ENCODE measurements at regions of chr18 and their contacts with region 1.

Region 1: GRCh38 chr18:3129053-3129864 is 90.5 kb downstream of the MYOM1 start:
- DNase-seq: peak; percentile 58 to 86 (median 77)
- ATAC-seq: peak; percentile 99
- H3K4me3 ChIP-seq: no peak overlapping the region
- H3K4me3 Mint-ChIP-seq: no peak overlapping the region
- H3K27ac ChIP-seq: no peak overlapping the region
- H3K27ac Mint-ChIP-seq: no peak overlapping the region
- H3K4me1 ChIP-seq: no peaks in the 10 kb centered on the region
- H3K4me1 Mint-ChIP-seq: peaks cover 9% of the 10 kb centered on the region
- H3K27me3 ChIP-seq: no peaks in the 10 kb centered on the region
- H3K27me3 Mint-ChIP-seq: no peaks in the 10 kb centered on the region
- CTCF ChIP-seq: peak; percentile 67

Region 2: DNA sequence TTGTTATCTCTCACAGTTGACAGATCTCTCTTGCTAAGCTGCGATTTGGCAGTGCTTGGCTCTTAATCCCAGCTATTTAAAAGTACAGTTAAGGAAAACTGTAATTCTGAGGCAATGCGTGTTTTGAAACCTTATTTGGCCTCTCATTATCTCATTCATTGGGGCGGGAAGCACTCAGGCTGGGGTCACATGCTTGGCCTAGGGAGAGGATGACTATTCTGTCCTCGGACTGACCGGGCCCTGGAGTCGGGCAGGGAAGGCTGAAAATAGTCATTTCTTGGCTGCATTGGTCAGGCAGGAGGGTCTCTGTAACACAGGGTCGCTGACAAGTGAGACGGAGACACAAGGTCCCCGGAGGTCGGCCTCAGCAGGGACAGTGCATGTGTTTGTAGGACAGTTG is 302.7 kb before region 1 on chr18:
- CTCF ChIA-PET with region 1: no interaction called
- POLR2A ChIA-PET with region 1: no interaction called
- intact Hi-C with region 1: no loop called
- DNase-seq: no peak
- ATAC-seq: no peak
- H3K4me3 ChIP-seq: no peak overlapping the region
- H3K4me3 Mint-ChIP-seq: no peak overlapping the region
- H3K27ac ChIP-seq: no peak overlapping the region
- H3K27ac Mint-ChIP-seq: no peak overlapping the region
- H3K4me1 ChIP-seq: no peaks in the 10 kb centered on the region
- H3K4me1 Mint-ChIP-seq: no peaks in the 10 kb centered on the region
- H3K27me3 ChIP-seq: no peaks in the 10 kb centered on the region
- H3K27me3 Mint-ChIP-seq: no peaks in the 10 kb centered on the region
- CTCF ChIP-seq: no peak

Region 3: DNA sequence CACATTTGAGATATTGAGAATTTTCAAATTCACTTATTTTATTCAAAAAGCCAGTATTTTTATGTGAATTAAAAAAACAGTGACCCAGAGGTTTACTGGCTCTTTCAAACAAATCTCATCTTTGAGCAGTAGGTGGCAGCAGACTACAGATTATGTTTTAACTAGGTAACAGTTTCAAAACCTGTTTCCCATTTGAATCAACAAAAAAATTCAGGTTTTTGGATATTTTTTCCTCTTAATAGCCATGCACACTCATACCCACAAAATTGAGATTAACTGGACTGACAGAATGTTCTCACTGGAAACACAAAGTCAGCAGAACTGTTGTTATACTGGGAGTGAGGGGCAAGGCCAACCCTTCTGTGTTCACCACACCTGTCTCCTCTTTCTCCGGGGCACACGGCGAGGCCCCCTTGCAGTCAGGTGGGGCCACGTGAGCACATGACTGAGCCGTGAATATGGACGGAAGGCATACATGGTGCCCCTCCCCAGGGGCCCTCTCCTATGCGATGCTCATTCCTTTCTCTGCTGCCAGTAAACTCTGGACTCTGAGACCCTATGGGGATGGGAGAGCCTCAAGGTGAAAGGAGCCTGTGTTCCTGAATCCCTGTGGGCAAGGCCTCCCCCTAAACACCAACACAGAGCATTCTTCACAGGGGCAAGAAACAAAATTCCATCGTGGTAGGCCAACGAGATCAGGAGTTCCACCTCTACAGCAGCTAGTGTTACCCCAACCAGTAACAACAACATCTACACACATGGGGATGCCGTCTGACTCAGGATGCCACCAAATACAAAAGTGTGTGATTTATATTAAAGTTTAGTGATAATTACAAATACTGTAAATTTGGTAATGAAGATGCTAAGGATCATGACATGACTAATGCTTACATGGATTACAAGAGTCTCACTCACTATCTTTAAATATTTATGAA is 196.7 kb before region 1 on chr18:
- CTCF ChIA-PET with region 1: interaction called, 36 read pairs
- POLR2A ChIA-PET with region 1: no interaction called
- intact Hi-C with region 1: loop called (anchors 1 kb)
- DNase-seq: peak in 6 of 9 experiments; percentile 37 to 82 (median 52)
- ATAC-seq: peak; percentile 79
- H3K4me3 ChIP-seq: no peak overlapping the region
- H3K4me3 Mint-ChIP-seq: no peak overlapping the region
- H3K27ac ChIP-seq: peak overlapping the region in 1 of 2 experiments; percentile 51
- H3K27ac Mint-ChIP-seq: peak overlapping the region; percentile 89
- H3K4me1 ChIP-seq: peaks cover 6% of the 10 kb centered on the region
- H3K4me1 Mint-ChIP-seq: peaks cover 23% of the 10 kb centered on the region
- H3K27me3 ChIP-seq: no peaks in the 10 kb centered on the region
- H3K27me3 Mint-ChIP-seq: no peaks in the 10 kb centered on the region
- CTCF ChIP-seq: peak; percentile 96

Region 4: DNA sequence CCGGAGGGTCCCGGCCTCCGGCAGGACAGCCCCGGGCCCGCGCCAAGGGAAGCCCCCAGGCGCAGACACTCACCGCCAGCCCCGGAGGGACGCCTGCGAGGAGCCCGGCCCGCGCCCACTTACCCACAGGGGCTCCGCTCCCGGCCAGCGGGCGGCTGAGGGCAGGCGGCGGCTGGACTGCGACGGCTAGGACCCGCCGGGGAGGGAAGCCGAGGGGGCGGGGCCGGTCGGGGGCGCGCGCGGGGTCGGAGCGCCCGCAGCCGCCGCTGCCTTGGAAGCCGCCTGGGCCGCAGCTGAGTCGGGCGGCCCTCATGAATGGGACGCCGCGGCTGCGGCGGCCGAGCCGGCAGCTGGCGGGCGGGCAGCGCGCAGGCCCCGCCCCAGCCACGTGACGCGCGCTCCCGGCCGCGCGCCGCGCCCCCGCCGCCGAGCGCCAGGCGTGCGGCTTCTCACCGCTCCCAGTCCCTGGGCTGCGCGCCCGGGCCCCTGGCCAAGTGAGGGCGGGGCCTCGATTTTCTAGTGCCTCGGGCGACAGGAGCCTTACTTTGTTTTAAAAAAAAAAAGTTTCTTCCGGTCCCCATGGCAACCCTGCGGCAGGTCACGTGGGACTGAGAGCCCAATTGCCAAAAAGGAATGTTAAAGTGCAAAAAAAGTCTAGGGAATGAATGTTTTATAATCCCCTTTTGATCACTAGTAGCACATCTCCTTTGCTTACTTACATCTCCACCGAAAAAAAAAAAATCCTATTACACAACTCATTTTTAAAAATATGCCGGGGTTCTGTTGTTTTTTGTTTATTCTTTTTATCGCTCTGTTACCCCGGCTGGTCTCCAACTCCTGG is 116.1 kb before region 1 on chr18 and contains the start of gene LPIN2:
- CTCF ChIA-PET with region 1: interaction called, 8 read pairs
- POLR2A ChIA-PET with region 1: no interaction called
- intact Hi-C with region 1: loop called in 1 of 2 experiments (anchors 5 kb)
- DNase-seq: peak; percentile 93 to 98 (median 95)
- ATAC-seq: peak; percentile 87
- H3K4me3 ChIP-seq: peak within 1 kb of the TSS; percentile 53
- H3K4me3 Mint-ChIP-seq: peak within 1 kb of the TSS; percentile 95
- H3K27ac ChIP-seq: peak within 1 kb of the TSS; percentile 73 to 79
- H3K27ac Mint-ChIP-seq: peak within 1 kb of the TSS; percentile 93
- H3K4me1 ChIP-seq: peaks cover 55% of the 10 kb centered on the region
- H3K4me1 Mint-ChIP-seq: peaks cover 64% of the 10 kb centered on the region
- H3K27me3 ChIP-seq: no peaks in the 10 kb centered on the region
- H3K27me3 Mint-ChIP-seq: no peaks in the 10 kb centered on the region
- CTCF ChIP-seq: no peak
- total RNA-seq, gene LPIN2: 50.3 to 50.9 TPM

Region 5: GRCh38 chr18:3074087-3074486 is 55.2 kb before region 1 on chr18:
- CTCF ChIA-PET with region 1: interaction called, 11 read pairs
- POLR2A ChIA-PET with region 1: no interaction called
- intact Hi-C with region 1: no loop called
- DNase-seq: peak in 1 of 9 experiments; percentile 43
- ATAC-seq: no peak
- H3K4me3 ChIP-seq: no peak overlapping the region
- H3K4me3 Mint-ChIP-seq: no peak overlapping the region
- H3K27ac ChIP-seq: no peak overlapping the region
- H3K27ac Mint-ChIP-seq: no peak overlapping the region
- H3K4me1 ChIP-seq: no peaks in the 10 kb centered on the region
- H3K4me1 Mint-ChIP-seq: peaks cover 22% of the 10 kb centered on the region
- H3K27me3 ChIP-seq: no peaks in the 10 kb centered on the region
- H3K27me3 Mint-ChIP-seq: no peaks in the 10 kb centered on the region
- CTCF ChIP-seq: no peak

Region 6: DNA sequence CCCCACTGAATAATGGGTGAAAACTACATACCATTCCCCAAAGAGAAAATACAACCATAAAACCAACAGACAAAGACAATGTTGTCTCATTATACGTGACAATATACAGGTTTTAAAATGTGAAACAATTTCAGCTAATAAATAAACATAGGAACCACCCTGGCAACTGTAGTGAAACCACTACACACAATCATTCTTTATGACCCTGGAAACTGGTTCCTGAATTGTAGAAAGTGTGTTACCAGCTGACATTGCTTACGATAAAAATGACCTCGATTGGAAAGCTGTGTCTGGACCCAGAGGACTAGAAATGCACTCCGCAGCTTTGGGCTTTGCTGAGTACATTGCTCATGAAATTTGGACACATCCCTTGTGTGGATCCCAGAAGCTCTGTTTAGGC is 42.4 kb before region 1 on chr18:
- CTCF ChIA-PET with region 1: no interaction called
- POLR2A ChIA-PET with region 1: no interaction called
- intact Hi-C with region 1: no loop called
- DNase-seq: no peak
- ATAC-seq: no peak
- H3K4me3 ChIP-seq: no peak overlapping the region
- H3K4me3 Mint-ChIP-seq: no peak overlapping the region
- H3K27ac ChIP-seq: no peak overlapping the region
- H3K27ac Mint-ChIP-seq: no peak overlapping the region
- H3K4me1 ChIP-seq: no peaks in the 10 kb centered on the region
- H3K4me1 Mint-ChIP-seq: peaks cover 8% of the 10 kb centered on the region
- H3K27me3 ChIP-seq: no peaks in the 10 kb centered on the region
- H3K27me3 Mint-ChIP-seq: no peaks in the 10 kb centered on the region
- CTCF ChIP-seq: no peak

Region 7: DNA sequence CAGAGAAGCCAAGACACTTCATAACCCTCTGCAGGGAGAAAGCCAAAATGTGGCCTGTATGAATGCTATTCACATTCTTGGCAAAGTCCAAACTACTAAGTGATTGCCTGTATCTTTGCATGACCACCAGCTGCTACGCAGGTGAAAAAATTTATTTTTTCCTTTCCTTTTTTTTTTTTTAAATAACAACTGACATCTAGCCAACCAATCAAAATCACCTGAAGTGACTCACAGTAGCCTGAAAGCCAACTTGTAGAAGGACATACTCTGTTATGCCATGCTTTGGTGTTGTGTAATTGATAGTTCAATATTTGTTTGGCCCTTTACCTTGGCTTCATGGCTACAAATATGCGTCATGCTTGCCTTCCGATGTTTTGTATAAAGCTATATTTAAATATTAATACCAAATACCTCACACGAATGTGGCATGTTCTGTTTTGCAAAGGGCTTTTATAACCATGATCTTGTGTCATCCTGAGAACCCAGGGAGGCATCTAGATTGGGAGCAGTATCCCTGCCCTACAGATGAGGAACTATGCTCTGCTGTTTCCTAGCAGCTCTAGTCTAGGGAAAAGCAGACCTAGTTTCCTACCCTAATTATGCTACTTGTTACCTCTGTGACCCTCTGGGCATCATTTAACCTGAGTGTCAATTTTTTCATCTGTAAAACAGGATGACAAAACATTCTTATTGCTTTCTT is 11.6 kb before region 1 on chr18:
- CTCF ChIA-PET with region 1: interaction called, 23 read pairs
- POLR2A ChIA-PET with region 1: interaction called, 3 read pairs
- intact Hi-C with region 1: no loop called
- DNase-seq: no peak
- ATAC-seq: no peak
- H3K4me3 ChIP-seq: no peak overlapping the region
- H3K4me3 Mint-ChIP-seq: no peak overlapping the region
- H3K27ac ChIP-seq: no peak overlapping the region
- H3K27ac Mint-ChIP-seq: no peak overlapping the region
- H3K4me1 ChIP-seq: no peaks in the 10 kb centered on the region
- H3K4me1 Mint-ChIP-seq: no peaks in the 10 kb centered on the region
- H3K27me3 ChIP-seq: no peaks in the 10 kb centered on the region
- H3K27me3 Mint-ChIP-seq: no peaks in the 10 kb centered on the region
- CTCF ChIP-seq: no peak

Region 8: GRCh38 chr18:3175195-3175758 is 46.0 kb after region 1 on chr18:
- CTCF ChIA-PET with region 1: interaction called, 11 read pairs
- POLR2A ChIA-PET with region 1: no interaction called
- intact Hi-C with region 1: no loop called
- DNase-seq: no peak
- ATAC-seq: no peak
- H3K4me3 ChIP-seq: no peak overlapping the region
- H3K4me3 Mint-ChIP-seq: no peak overlapping the region
- H3K27ac ChIP-seq: no peak overlapping the region
- H3K27ac Mint-ChIP-seq: no peak overlapping the region
- H3K4me1 ChIP-seq: no peaks in the 10 kb centered on the region
- H3K4me1 Mint-ChIP-seq: peaks cover 7% of the 10 kb centered on the region
- H3K27me3 ChIP-seq: no peaks in the 10 kb centered on the region
- H3K27me3 Mint-ChIP-seq: no peaks in the 10 kb centered on the region
- CTCF ChIP-seq: no peak

Region 9: GRCh38 chr18:3245853-3246634 is 116.8 kb after region 1 on chr18:
- CTCF ChIA-PET with region 1: interaction called, 16 read pairs
- POLR2A ChIA-PET with region 1: interaction called, 3 read pairs
- intact Hi-C with region 1: no loop called
- DNase-seq: peak; percentile 44 to 89 (median 78)
- ATAC-seq: peak; percentile 60
- H3K4me3 ChIP-seq: peak overlapping the region; percentile 77 to 90
- H3K4me3 Mint-ChIP-seq: peak overlapping the region; percentile 92
- H3K27ac ChIP-seq: peak overlapping the region; percentile 79 to 89
- H3K27ac Mint-ChIP-seq: peak overlapping the region; percentile 90
- H3K4me1 ChIP-seq: peaks cover 11% of the 10 kb centered on the region
- H3K4me1 Mint-ChIP-seq: peaks cover 39% of the 10 kb centered on the region
- H3K27me3 ChIP-seq: no peaks in the 10 kb centered on the region
- H3K27me3 Mint-ChIP-seq: no peaks in the 10 kb centered on the region
- CTCF ChIP-seq: peak; percentile 84

Region 10: DNA sequence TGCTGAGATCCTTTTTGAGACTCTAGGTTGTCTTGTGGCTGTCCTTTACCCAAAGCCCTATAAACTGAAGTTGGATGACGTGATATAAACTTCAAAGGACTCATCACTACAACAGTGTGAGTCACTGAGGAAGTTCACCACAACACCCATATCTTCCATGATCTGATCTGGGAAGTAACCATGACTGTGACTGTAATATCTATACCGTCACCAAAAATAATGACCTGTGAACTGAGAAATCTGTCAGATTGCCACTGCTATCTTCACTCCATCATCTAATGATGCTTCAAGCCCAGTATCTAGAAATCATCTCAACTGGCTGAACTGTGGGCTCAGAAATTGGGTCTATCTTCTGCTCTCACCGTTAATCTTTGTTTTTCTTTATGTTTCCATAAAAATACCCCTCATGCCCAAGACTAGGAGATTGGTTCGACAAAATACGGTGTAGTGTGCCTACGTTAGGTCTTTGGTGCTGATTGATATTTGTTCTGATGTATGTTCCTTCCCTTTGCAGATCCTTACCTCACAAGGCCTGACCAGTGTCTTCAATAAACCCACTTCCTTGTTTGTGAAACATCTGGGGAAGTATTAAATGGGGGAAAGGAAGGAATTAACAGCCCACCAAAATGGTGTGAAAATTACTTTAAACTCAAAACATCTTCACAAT is 210.9 kb after region 1 on chr18:
- CTCF ChIA-PET with region 1: no interaction called
- POLR2A ChIA-PET with region 1: no interaction called
- intact Hi-C with region 1: no loop called
- DNase-seq: peak in 2 of 9 experiments; percentile 4 to 14
- ATAC-seq: peak; percentile 31
- H3K4me3 ChIP-seq: no peak overlapping the region
- H3K4me3 Mint-ChIP-seq: no peak overlapping the region
- H3K27ac ChIP-seq: no peak overlapping the region
- H3K27ac Mint-ChIP-seq: no peak overlapping the region
- H3K4me1 ChIP-seq: no peaks in the 10 kb centered on the region
- H3K4me1 Mint-ChIP-seq: no peaks in the 10 kb centered on the region
- H3K27me3 ChIP-seq: no peaks in the 10 kb centered on the region
- H3K27me3 Mint-ChIP-seq: no peaks in the 10 kb centered on the region
- CTCF ChIP-seq: no peak